ENCODE measurements at regions of chr17 and their contacts with region 1.

Region 1: DNA sequence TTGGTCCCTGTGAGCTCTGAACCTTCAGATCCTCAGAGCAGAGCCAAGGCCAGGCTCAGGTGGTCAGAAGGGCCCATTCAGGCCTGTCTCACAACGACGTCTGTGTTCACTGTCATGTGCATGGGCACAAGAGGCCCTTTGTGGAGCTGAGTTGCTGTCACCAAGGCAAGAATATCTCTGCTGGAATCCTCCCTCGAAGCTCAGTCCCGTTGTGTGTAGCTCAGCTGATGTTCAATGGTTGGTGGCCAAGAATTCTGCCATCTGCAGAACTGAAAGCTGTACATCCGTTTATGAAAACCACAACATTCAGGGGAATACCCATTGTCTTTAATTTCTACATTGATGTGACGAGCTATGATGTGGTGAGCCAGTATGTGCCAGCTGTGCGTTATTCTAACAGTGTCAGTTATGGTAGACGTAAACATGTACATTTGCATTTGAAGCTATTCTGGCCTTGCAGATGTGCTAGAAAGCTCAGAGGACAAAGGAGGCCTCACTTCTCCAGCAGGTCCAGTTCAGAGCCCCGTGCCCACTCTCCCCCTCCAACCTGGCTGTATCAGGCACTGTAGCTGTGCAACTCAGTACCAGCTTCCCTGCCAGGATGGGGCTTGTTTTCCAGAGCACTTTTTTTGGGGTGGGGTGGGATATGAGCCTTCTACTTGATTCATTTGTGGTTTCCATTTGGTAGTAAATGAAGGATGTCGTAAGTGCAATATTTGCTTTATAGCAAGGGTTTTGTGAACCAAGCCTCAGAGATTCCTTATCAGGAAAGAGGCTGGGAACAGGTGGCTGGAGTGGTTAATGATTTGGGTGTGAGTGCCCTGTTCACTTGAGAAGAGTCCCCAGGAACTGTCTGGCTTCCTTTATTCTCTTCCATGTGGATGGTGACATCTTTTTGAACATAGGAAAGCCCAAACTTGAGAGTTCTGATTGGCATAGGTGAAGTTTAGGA is 56.1 kb downstream of the B9D1 start:
- DNase-seq: peak in 8 of 9 donors; percentile 26 to 83 (median 73)
- ATAC-seq: peak; percentile 89
- H3K4me3 ChIP-seq: no peak overlapping the region
- H3K4me3 Mint-ChIP-seq: peak overlapping the region in 9 of 10 donors; percentile 34 to 80 (median 57)
- H3K27ac ChIP-seq: no peak overlapping the region
- H3K27ac Mint-ChIP-seq: peak overlapping the region in 7 of 9 donors; percentile 9 to 79 (median 63)
- H3K4me1 ChIP-seq: peaks cover 15 to 23% of the 10 kb centered on the region in 2 donors
- H3K4me1 Mint-ChIP-seq: peaks cover 14 to 42% (median 26%) of the 10 kb centered on the region in 7 donors
- H3K27me3 ChIP-seq: peaks cover 0 to 18% of the 10 kb centered on the region in 2 donors
- H3K27me3 Mint-ChIP-seq: peaks cover 23 to 58% (median 43%) of the 10 kb centered on the region in 5 donors

Region 2: GRCh38 chr17:19275457-19276127 is 30.8 kb before region 1 on chr17:
- CTCF ChIA-PET with region 1: no interaction called
- POLR2A ChIA-PET with region 1: interaction called, 6 read pairs
- intact Hi-C with region 1: loop called in 1 of 2 experiments (anchors 1 kb)
- DNase-seq: no peak
- ATAC-seq: no peak
- H3K4me3 ChIP-seq: no peak overlapping the region
- H3K4me3 Mint-ChIP-seq: no peak overlapping the region
- H3K27ac ChIP-seq: no peak overlapping the region
- H3K27ac Mint-ChIP-seq: no peak overlapping the region
- H3K4me1 ChIP-seq: no peaks in the 10 kb centered on the region
- H3K4me1 Mint-ChIP-seq: peaks cover 0 to 5% (median 0%) of the 10 kb centered on the region in 7 donors
- H3K27me3 ChIP-seq: no peaks in the 10 kb centered on the region
- H3K27me3 Mint-ChIP-seq: peaks cover 0 to 10% (median 0%) of the 10 kb centered on the region in 5 donors

Region 3: GRCh38 chr17:19507775-19508576 is 201.5 kb after region 1 on chr17:
- CTCF ChIA-PET with region 1: no interaction called
- POLR2A ChIA-PET with region 1: no interaction called
- intact Hi-C with region 1: no loop called
- DNase-seq: peak; percentile 82 to 96 (median 90)
- ATAC-seq: peak; percentile 85
- H3K4me3 ChIP-seq: peak overlapping the region; percentile 99
- H3K4me3 Mint-ChIP-seq: peak overlapping the region; percentile 87 to 99 (median 91)
- H3K27ac ChIP-seq: peak overlapping the region; percentile 67
- H3K27ac Mint-ChIP-seq: peak overlapping the region; percentile 95 to 99 (median 96)
- H3K4me1 ChIP-seq: peaks cover 0 to 6% of the 10 kb centered on the region in 2 donors
- H3K4me1 Mint-ChIP-seq: peaks cover 8 to 13% (median 11%) of the 10 kb centered on the region in 7 donors
- H3K27me3 ChIP-seq: no peaks in the 10 kb centered on the region
- H3K27me3 Mint-ChIP-seq: peaks cover 0 to 24% (median 0%) of the 10 kb centered on the region in 5 donors

Measured in naive thymus-derived CD4-positive, alpha-beta T cell (primary cell).